Left lung (tissue), 14 donors: ENCODE measurements at regions of chr2 and their contacts with region 1.

Region 1: DNA sequence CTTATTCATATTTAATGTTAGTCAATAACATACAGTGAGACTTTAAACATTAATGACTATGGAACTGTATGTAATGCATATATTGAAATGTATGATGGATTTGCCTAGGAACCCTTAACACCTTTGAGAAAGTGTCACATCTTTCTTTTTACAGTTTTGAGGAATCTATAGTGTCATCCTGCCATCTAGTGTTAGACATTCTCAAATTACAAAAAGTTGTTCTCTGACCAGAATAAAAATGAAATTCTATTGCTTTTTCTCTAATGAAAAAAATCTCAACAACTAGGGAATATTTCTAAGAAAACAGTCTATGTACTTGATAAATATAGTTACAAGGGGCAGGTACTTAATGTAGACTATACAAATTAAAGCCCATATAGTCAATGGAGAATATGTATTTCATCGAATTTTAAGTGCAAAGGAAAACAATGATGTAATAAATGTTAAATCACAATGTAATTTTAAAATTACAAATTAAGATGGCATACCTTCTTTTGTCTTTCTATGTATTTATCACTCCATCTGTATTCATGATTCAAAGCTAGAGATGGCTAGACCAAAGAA is 5.1 kb upstream of the CALCRL start:
- DNase-seq: no peak
- ATAC-seq: no peak
- H3K4me3 ChIP-seq: no peak overlapping the region
- H3K27ac ChIP-seq: no peak overlapping the region
- H3K4me1 ChIP-seq: no peaks in the 10 kb centered on the region
- H3K27me3 ChIP-seq: no peaks in the 10 kb centered on the region
- CTCF ChIP-seq: peak; percentile 13 to 25

Region 2: GRCh38 chr2:186862869-186863709 is 590.1 kb before region 1 on chr2:
- intact Hi-C with region 1: loop called in 1 of 2 experiments (anchors 10 kb)
- DNase-seq: peak in 2 of 4 donors; percentile 50
- ATAC-seq: peak; percentile 74
- H3K4me3 ChIP-seq: no peak overlapping the region
- H3K27ac ChIP-seq: no peak overlapping the region
- H3K4me1 ChIP-seq: no peaks in the 10 kb centered on the region
- H3K27me3 ChIP-seq: no peaks in the 10 kb centered on the region
- CTCF ChIP-seq: peak; percentile 63 to 67

Region 3: GRCh38 chr2:186995092-186995491 is 458.1 kb before region 1 on chr2:
- intact Hi-C with region 1: no loop called
- DNase-seq: no peak
- ATAC-seq: no peak
- H3K4me3 ChIP-seq: no peak overlapping the region
- H3K27ac ChIP-seq: no peak overlapping the region
- H3K4me1 ChIP-seq: no peaks in the 10 kb centered on the region
- H3K27me3 ChIP-seq: no peaks in the 10 kb centered on the region
- CTCF ChIP-seq: no peak